ENCODE measurements at regions of chr11 and their contacts with region 1.

Region 1: GRCh38 chr11:31521497-31522150 is 12.1 kb downstream of the ELP4 start:
- DNase-seq: no peak
- ATAC-seq: no peak
- H3K4me3 Mint-ChIP-seq: no peak overlapping the region
- H3K27ac Mint-ChIP-seq: no peak overlapping the region
- H3K4me1 Mint-ChIP-seq: no peaks in the 10 kb centered on the region
- H3K27me3 Mint-ChIP-seq: no peaks in the 10 kb centered on the region

Region 2: DNA sequence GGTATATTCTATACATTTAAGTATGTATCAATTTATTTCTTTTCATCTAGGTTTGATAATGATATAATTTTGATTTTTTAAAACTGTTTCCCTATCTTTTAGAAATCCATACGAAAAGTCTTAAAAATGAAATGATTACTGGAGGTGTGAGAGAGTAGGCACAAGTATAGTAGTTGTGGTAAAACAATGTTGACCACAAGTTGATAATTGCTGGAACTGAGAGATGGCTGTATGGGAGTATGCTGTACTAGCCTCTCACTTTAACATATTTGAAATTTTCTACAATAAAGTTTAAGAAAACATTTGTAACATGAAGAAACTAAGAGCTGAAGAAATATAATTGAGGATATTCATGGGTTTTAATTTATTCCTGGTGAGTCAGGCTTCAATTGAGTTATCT is 1260.8 kb before region 1 on chr11:
- CTCF ChIA-PET with region 1: no interaction called
- POLR2A ChIA-PET with region 1: no interaction called
- intact Hi-C with region 1: loop called in 1 of 2 experiments (anchors 5 kb)
- DNase-seq: no peak
- ATAC-seq: no peak
- H3K4me3 Mint-ChIP-seq: no peak overlapping the region
- H3K27ac Mint-ChIP-seq: no peak overlapping the region
- H3K4me1 Mint-ChIP-seq: no peaks in the 10 kb centered on the region
- H3K27me3 Mint-ChIP-seq: peaks cover 3% of the 10 kb centered on the region